ENCODE measurements at regions of chr5 and their contacts with region 1.

Region 1: DNA sequence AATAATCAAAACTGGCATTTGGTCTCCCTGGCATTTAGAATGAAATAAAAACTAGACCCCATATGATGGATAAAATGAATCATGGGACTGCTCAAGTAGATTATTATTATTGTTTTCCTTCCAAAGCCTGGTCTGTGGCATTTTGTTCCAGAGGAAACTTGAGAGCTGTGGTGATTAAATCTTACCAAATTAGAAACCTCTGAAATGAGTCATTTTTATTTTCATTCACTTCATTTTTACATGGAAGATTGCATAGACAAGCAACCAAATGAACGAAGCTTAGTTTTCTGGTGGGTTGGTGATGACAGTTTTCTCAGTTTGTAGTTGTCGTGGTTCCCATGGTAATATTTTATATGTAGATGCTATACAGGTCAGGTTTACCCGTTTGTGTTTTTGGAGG is 23.4 kb downstream of the PAM start:
- DNase-seq: no peak
- H3K4me3 ChIP-seq: no peak overlapping the region
- H3K4me3 Mint-ChIP-seq: no peak overlapping the region
- H3K27ac Mint-ChIP-seq: no peak overlapping the region
- H3K4me1 ChIP-seq: no peaks in the 10 kb centered on the region
- H3K4me1 Mint-ChIP-seq: no peaks in the 10 kb centered on the region
- H3K27me3 ChIP-seq: no peaks in the 10 kb centered on the region
- H3K27me3 Mint-ChIP-seq: no peaks in the 10 kb centered on the region
- CTCF ChIP-seq: no peak

Region 2: GRCh38 chr5:102498271-102499034 is 280.0 kb before region 1 on chr5 and contains the start of gene SLCO6A1:
- CTCF ChIA-PET with region 1: no interaction called
- POLR2A ChIA-PET with region 1: no interaction called
- intact Hi-C with region 1: no loop called
- DNase-seq: no peak
- H3K4me3 ChIP-seq: no peak within 1 kb of the TSS
- H3K4me3 Mint-ChIP-seq: no peak within 1 kb of the TSS
- H3K27ac Mint-ChIP-seq: no peak within 1 kb of the TSS
- H3K4me1 ChIP-seq: no peaks in the 10 kb centered on the region
- H3K4me1 Mint-ChIP-seq: no peaks in the 10 kb centered on the region
- H3K27me3 ChIP-seq: no peaks in the 10 kb centered on the region
- H3K27me3 Mint-ChIP-seq: peaks cover 2% of the 10 kb centered on the region
- CTCF ChIP-seq: no peak
- total RNA-seq, gene SLCO6A1: not detected in 2 replicates

Region 3: GRCh38 chr5:102583276-102584124 is 195.0 kb before region 1 on chr5:
- CTCF ChIA-PET with region 1: no interaction called
- POLR2A ChIA-PET with region 1: no interaction called
- intact Hi-C with region 1: no loop called
- DNase-seq: no peak
- H3K4me3 ChIP-seq: no peak overlapping the region
- H3K4me3 Mint-ChIP-seq: no peak overlapping the region
- H3K27ac Mint-ChIP-seq: no peak overlapping the region
- H3K4me1 ChIP-seq: no peaks in the 10 kb centered on the region
- H3K4me1 Mint-ChIP-seq: no peaks in the 10 kb centered on the region
- H3K27me3 ChIP-seq: no peaks in the 10 kb centered on the region
- H3K27me3 Mint-ChIP-seq: no peaks in the 10 kb centered on the region
- CTCF ChIP-seq: peak in 1 of 2 experiments; percentile 63

Region 4: DNA sequence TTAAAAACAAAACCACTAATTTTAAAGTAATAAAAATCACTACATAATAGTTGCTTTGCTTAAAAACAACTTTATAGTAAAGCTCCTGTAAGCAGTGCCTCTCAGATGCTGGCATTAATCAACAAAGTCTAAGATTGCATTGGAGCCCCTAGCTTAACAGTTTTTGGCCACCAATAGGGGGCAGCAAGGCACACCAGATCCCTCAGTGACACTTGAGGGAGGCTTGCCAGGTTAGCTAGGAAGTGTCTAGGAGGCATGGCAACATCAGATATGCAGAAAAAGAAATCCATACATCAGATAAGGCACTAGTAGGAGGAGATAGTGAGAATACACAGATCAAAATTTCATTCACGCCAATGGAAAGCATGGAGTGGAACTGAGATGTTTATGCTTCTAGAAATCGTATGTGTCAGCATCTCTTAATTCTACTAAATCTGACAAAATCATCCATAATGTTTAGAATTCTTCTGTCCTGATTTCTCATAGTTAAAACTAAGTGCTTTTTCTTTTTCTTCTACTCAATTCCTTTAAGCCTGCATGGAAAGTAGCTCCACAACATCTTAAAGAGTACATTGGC is 97.0 kb before region 1 on chr5:
- CTCF ChIA-PET with region 1: interaction called, 6 read pairs
- POLR2A ChIA-PET with region 1: no interaction called
- intact Hi-C with region 1: loop called (anchors 1 kb)
- DNase-seq: peak; percentile 65 to 70
- H3K4me3 ChIP-seq: no peak overlapping the region
- H3K4me3 Mint-ChIP-seq: no peak overlapping the region
- H3K27ac Mint-ChIP-seq: no peak overlapping the region
- H3K4me1 ChIP-seq: no peaks in the 10 kb centered on the region
- H3K4me1 Mint-ChIP-seq: no peaks in the 10 kb centered on the region
- H3K27me3 ChIP-seq: no peaks in the 10 kb centered on the region
- H3K27me3 Mint-ChIP-seq: no peaks in the 10 kb centered on the region
- CTCF ChIP-seq: peak; percentile 63 to 70

Region 5: DNA sequence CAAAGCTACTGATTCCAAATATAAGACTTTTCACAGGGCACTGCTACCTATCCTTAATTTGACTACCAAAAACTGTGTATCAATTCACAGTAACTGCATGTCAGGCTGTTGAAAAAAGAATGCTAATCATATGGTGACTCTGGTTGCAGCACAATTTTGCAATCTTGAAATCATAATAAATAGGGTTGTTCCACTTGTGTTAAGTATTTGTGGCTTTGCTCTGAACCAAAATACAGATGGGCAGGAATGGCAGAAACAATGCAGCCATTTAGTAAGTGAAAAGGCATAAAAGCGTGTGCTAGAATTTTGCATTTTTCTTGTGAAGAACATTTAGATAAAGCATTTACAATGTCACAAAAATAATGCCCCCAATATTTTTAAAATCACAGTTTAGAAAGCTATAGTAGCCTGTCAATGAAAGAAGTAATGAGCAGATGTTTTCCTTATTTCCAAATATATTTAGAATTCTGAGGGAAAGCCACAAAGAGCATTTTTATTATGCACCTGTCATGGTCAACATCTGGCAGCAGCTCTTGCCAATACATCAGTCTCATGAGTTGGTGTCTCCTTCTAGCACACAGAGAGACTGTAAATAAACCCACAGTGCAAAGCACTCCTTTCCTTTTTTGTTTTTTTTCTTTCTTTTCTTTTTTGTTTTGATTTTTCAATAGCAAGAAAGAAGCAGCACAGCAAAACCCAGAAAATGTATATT is 78.2 kb before region 1 on chr5:
- CTCF ChIA-PET with region 1: no interaction called
- POLR2A ChIA-PET with region 1: no interaction called
- intact Hi-C with region 1: no loop called
- DNase-seq: no peak
- H3K4me3 ChIP-seq: no peak overlapping the region
- H3K4me3 Mint-ChIP-seq: no peak overlapping the region
- H3K27ac Mint-ChIP-seq: no peak overlapping the region
- H3K4me1 ChIP-seq: peaks cover 7% of the 10 kb centered on the region; the same call in 1 of the 2 replicates
- H3K4me1 Mint-ChIP-seq: no peaks in the 10 kb centered on the region
- H3K27me3 ChIP-seq: no peaks in the 10 kb centered on the region
- H3K27me3 Mint-ChIP-seq: no peaks in the 10 kb centered on the region
- CTCF ChIP-seq: no peak

Region 6: GRCh38 chr5:102959055-102959454 is 180.6 kb after region 1 on chr5:
- CTCF ChIA-PET with region 1: no interaction called
- POLR2A ChIA-PET with region 1: no interaction called
- intact Hi-C with region 1: loop called (anchors 5 kb)
- DNase-seq: no peak
- H3K4me3 ChIP-seq: no peak overlapping the region
- H3K4me3 Mint-ChIP-seq: no peak overlapping the region
- H3K27ac Mint-ChIP-seq: no peak overlapping the region
- H3K4me1 ChIP-seq: no peaks in the 10 kb centered on the region
- H3K4me1 Mint-ChIP-seq: peaks cover 11% of the 10 kb centered on the region
- H3K27me3 ChIP-seq: no peaks in the 10 kb centered on the region
- H3K27me3 Mint-ChIP-seq: no peaks in the 10 kb centered on the region
- CTCF ChIP-seq: no peak

Region 7: GRCh38 chr5:102971697-102972293 is 193.3 kb after region 1 on chr5:
- CTCF ChIA-PET with region 1: interaction called, 4 read pairs
- POLR2A ChIA-PET with region 1: no interaction called
- intact Hi-C with region 1: loop called (anchors 1 kb)
- DNase-seq: peak in 1 of 2 experiments; percentile 6
- H3K4me3 ChIP-seq: no peak overlapping the region
- H3K4me3 Mint-ChIP-seq: no peak overlapping the region
- H3K27ac Mint-ChIP-seq: no peak overlapping the region
- H3K4me1 ChIP-seq: no peaks in the 10 kb centered on the region
- H3K4me1 Mint-ChIP-seq: no peaks in the 10 kb centered on the region
- H3K27me3 ChIP-seq: no peaks in the 10 kb centered on the region
- H3K27me3 Mint-ChIP-seq: no peaks in the 10 kb centered on the region
- CTCF ChIP-seq: peak in 1 of 2 experiments; percentile 47

Region 8: GRCh38 chr5:103139264-103139865 is 360.9 kb after region 1 on chr5:
- CTCF ChIA-PET with region 1: no interaction called
- POLR2A ChIA-PET with region 1: no interaction called
- intact Hi-C with region 1: loop called (anchors 1 kb)
- DNase-seq: peak; percentile 78 to 84
- H3K4me3 ChIP-seq: no peak overlapping the region
- H3K4me3 Mint-ChIP-seq: no peak overlapping the region
- H3K27ac Mint-ChIP-seq: no peak overlapping the region
- H3K4me1 ChIP-seq: peaks cover 22% of the 10 kb centered on the region
- H3K4me1 Mint-ChIP-seq: no peaks in the 10 kb centered on the region
- H3K27me3 ChIP-seq: no peaks in the 10 kb centered on the region
- H3K27me3 Mint-ChIP-seq: no peaks in the 10 kb centered on the region
- CTCF ChIP-seq: peak; percentile 92 to 93